ENCODE measurements at regions of chr12 and their contacts with region 1.

Region 1: GRCh38 chr12:26097046-26097878 is 27.6 kb downstream of the BHLHE41 start:
- DNase-seq: peak; percentile 82 to 87
- H3K4me3 ChIP-seq: no peak overlapping the region
- H3K4me3 Mint-ChIP-seq: no peak overlapping the region
- H3K27ac Mint-ChIP-seq: no peak overlapping the region
- H3K4me1 ChIP-seq: peaks cover 54% of the 10 kb centered on the region
- H3K4me1 Mint-ChIP-seq: peaks cover 41% of the 10 kb centered on the region
- H3K27me3 ChIP-seq: no peaks in the 10 kb centered on the region
- H3K27me3 Mint-ChIP-seq: no peaks in the 10 kb centered on the region
- CTCF ChIP-seq: peak; percentile 96 to 98

Region 2: DNA sequence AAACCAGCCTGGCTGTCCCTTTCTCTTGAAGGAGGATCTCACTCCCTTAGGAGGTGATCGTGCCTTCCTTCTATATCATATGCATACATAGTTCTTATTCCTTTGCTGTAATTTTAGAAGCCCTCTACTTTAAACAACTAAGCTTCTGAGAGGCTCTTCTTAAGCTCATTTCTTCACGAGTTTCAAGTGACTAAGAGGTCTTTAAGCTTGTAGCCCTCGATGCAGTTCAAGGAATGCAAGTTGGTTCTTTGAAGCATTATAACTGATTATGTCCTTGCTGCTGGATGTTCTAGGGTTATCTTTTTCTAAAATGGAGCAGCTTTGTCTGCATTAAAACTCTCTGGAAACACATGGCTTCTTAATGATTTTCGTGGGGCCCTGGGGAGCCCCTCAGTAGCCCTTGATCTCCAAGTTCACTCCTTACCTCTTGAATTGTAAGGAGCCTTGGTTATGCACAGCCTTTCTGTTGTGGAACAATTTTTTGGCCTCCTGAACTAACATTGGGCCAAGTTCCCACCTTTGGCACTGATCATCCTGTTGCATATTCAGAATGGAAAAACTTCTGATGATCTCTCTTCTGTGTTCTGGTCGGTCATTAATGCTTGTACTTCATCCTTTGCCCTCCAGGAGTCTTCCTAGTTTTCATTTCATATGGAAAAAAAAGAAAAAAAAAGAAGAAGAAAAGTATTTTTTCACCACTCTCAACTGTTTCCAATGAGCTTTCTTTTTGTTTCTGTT is 126.2 kb before region 1 on chr12:
- CTCF ChIA-PET with region 1: no interaction called
- POLR2A ChIA-PET with region 1: no interaction called
- intact Hi-C with region 1: no loop called
- DNase-seq: no peak
- H3K4me3 ChIP-seq: no peak overlapping the region
- H3K4me3 Mint-ChIP-seq: no peak overlapping the region
- H3K27ac Mint-ChIP-seq: no peak overlapping the region
- H3K4me1 ChIP-seq: no peaks in the 10 kb centered on the region
- H3K4me1 Mint-ChIP-seq: peaks cover 64% of the 10 kb centered on the region
- H3K27me3 ChIP-seq: no peaks in the 10 kb centered on the region
- H3K27me3 Mint-ChIP-seq: no peaks in the 10 kb centered on the region
- CTCF ChIP-seq: peak in 1 of 2 experiments; percentile 56

Region 3: DNA sequence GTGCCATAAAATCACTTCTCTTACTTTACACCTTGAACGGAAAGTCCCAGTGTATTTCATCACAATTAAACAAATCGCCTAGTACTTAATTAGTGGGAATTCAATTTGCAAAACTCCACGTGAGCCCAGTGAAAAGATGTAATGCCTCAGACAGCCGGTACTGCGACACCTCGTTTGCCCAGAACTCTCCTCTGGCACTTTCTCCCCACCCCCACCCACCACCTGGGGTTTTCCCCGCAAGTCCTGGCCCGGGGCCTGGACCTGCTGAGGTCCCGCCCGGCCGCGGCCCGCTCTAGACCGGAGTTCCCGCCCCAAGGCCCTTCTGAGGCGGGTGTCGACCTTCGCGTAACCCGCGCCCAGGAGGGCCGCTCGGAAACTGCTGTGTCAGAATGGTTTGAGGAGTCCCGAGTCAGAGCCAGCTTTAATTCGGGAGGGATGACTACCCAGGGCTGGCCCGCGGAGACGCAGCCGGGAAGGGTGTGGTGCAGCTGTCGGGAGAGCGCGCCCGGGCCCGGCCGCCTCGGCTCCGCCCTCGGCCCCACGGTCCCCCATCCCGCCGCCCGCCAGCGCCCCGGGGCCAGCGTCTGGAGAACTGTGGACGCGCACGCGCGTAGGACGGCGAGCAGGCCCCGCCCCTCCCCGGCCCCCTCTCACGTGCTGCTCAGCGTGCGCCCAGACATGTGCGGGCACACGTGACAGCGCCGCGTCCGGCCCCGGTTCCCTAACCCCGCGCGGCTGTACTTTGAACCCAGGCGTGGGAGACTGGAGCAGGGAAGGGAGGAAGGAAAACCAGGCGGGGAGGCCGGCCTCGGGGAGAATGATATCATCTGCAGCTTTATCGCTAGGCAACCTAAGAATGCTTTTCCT is 16.8 kb after region 1 on chr12:
- CTCF ChIA-PET with region 1: interaction called, 6 read pairs
- POLR2A ChIA-PET with region 1: interaction called, 8 read pairs
- intact Hi-C with region 1: loop called (anchors 1 kb)
- DNase-seq: peak; percentile 98
- H3K4me3 ChIP-seq: peak overlapping the region; percentile 77
- H3K4me3 Mint-ChIP-seq: peak overlapping the region; percentile 78
- H3K27ac Mint-ChIP-seq: peak overlapping the region; percentile 90
- H3K4me1 ChIP-seq: peaks cover 23% of the 10 kb centered on the region
- H3K4me1 Mint-ChIP-seq: peaks cover 18% of the 10 kb centered on the region
- H3K27me3 ChIP-seq: no peaks in the 10 kb centered on the region
- H3K27me3 Mint-ChIP-seq: peaks cover 2% of the 10 kb centered on the region
- CTCF ChIP-seq: peak; percentile 12 to 48

Region 4: GRCh38 chr12:26156201-26156871 is 59.1 kb after region 1 on chr12:
- CTCF ChIA-PET with region 1: no interaction called
- POLR2A ChIA-PET with region 1: no interaction called
- intact Hi-C with region 1: loop called (anchors 2 kb)
- DNase-seq: no peak
- H3K4me3 ChIP-seq: no peak overlapping the region
- H3K4me3 Mint-ChIP-seq: no peak overlapping the region
- H3K27ac Mint-ChIP-seq: no peak overlapping the region
- H3K4me1 ChIP-seq: peaks cover 22% of the 10 kb centered on the region
- H3K4me1 Mint-ChIP-seq: peaks cover 12% of the 10 kb centered on the region
- H3K27me3 ChIP-seq: no peaks in the 10 kb centered on the region
- H3K27me3 Mint-ChIP-seq: no peaks in the 10 kb centered on the region
- CTCF ChIP-seq: no peak

Region 5: DNA sequence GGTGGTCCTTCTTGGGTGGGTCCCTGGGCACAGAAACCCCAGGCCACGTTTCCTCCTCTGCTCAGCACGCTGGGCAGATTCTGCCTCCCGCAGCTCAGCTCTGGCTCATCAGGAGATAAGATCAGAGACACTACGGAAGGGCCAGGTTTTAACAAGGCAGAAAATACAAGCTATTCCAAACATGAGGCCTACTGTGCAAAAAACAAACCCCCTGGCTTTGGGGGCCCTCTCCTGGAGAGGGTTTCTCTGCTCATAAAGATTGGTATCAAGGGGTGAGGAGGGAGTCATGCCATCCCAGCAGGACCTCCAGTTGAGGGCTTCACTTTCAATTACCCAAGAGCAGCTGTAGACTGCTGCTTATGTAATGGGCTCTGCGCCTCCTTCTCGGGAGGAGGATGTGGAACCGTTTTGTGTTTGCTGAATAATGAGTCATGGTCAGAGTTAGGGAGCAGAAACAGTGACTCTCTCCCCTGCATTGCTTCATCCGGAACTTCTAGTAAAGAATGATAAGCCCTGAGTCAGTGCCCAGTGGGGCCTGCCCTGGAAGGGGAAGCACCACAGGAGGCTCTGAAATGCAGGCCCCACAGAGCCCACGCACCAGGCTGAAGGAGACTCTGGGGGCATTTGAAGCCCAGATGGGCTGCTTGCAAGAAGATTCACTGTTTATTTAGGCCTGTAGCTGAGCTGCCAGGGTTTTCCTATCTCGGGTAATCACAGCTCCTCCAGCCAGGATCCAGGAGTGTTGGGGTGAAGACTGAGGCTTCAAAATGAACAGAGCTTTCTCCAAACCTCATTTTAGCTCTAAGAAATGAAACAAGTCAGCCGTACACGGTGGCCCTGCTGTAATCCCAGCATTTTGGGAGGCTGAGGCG is 177.4 kb after region 1 on chr12:
- CTCF ChIA-PET with region 1: interaction called, 3 read pairs
- POLR2A ChIA-PET with region 1: no interaction called
- intact Hi-C with region 1: loop called (anchors 1 kb)
- DNase-seq: peak; percentile 84 to 88
- H3K4me3 ChIP-seq: no peak overlapping the region
- H3K4me3 Mint-ChIP-seq: peak overlapping the region; percentile 6
- H3K27ac Mint-ChIP-seq: peak overlapping the region; percentile 92
- H3K4me1 ChIP-seq: peaks cover 47% of the 10 kb centered on the region
- H3K4me1 Mint-ChIP-seq: peaks cover 30% of the 10 kb centered on the region
- H3K27me3 ChIP-seq: no peaks in the 10 kb centered on the region
- H3K27me3 Mint-ChIP-seq: no peaks in the 10 kb centered on the region
- CTCF ChIP-seq: no peak

Region 6: GRCh38 chr12:26402648-26403047 is 305.4 kb after region 1 on chr12:
- CTCF ChIA-PET with region 1: no interaction called
- POLR2A ChIA-PET with region 1: no interaction called
- intact Hi-C with region 1: loop called (anchors 1 kb)
- DNase-seq: peak; percentile 46 to 47
- H3K4me3 ChIP-seq: no peak overlapping the region
- H3K4me3 Mint-ChIP-seq: no peak overlapping the region
- H3K27ac Mint-ChIP-seq: no peak overlapping the region
- H3K4me1 ChIP-seq: no peaks in the 10 kb centered on the region
- H3K4me1 Mint-ChIP-seq: no peaks in the 10 kb centered on the region
- H3K27me3 ChIP-seq: no peaks in the 10 kb centered on the region
- H3K27me3 Mint-ChIP-seq: no peaks in the 10 kb centered on the region
- CTCF ChIP-seq: peak; percentile 38 to 43

Region 7: DNA sequence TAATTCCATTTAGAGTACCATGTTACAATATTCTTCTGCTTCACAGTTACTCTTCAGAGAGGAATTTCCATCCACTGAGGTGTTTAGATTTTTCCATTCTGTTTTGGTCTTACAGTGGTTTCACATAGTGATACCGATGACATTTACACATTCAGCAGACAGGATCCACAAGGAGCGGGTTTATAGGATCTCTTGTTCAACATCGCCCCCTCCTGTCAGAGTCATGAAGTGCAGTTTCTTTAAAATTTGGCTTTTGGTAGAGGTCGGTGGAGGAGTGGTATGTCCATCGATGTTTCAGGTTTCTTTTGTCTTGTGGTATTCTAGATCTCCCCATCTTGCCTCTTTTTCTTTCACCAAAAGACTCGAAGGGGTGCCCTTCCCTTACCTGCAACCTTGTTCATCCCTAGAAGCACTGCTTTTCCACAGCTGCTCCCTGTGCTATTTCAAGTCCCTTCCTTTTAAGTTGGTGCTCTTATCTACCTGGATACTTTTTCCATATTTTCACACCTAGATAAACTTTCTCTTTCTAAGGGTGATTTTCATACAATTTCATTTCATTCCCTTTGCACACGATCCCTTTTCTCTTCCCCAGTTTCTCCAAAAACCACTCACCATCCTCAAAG is 554.4 kb after region 1 on chr12:
- CTCF ChIA-PET with region 1: no interaction called
- POLR2A ChIA-PET with region 1: no interaction called
- intact Hi-C with region 1: loop called (anchors 1 kb)
- DNase-seq: peak; percentile 65 to 88
- H3K4me3 ChIP-seq: no peak overlapping the region
- H3K4me3 Mint-ChIP-seq: no peak overlapping the region
- H3K27ac Mint-ChIP-seq: no peak overlapping the region
- H3K4me1 ChIP-seq: peaks cover 23% of the 10 kb centered on the region
- H3K4me1 Mint-ChIP-seq: peaks cover 32% of the 10 kb centered on the region
- H3K27me3 ChIP-seq: no peaks in the 10 kb centered on the region
- H3K27me3 Mint-ChIP-seq: no peaks in the 10 kb centered on the region
- CTCF ChIP-seq: peak; percentile 88 to 99

Region 8: DNA sequence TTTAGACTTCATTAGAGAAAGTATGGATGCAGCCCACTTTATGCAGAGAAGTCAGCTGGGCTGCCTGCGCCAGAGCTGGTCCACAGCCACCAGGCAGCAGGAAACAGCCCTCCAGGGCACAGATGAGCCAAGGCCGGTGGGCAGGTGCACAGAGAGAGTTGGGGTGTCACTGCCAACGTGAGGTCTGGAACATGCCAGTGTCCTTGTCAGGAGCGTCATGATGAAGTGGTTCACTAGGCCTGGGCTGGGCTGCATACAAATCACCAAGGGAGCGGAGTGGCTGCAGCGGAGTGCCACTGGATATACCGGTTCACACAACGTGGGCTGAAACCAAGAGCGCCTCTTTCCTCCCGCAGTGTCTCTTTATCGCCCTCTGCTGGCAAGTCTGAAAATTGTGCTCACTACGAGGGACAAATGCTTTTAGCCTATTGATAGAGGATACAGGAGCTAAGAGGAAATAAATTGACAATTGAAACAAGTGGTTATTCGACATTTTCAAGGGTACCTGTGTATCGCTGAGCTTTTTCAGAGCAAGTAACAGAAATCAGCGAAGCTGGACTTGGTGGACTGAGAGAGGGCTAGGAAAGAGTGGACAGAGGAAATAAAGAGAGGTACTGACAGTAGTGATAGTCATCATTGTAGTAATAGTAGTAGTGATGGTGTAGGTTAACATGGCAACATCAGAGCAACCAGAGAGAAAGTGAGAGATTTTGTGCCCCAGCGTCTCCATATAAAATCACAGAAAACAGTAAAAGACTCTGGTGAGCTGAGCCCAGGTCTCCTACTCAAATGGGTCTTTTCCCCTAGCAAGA is 787.7 kb after region 1 on chr12:
- CTCF ChIA-PET with region 1: no interaction called
- POLR2A ChIA-PET with region 1: no interaction called
- intact Hi-C with region 1: loop called (anchors 10 kb)
- DNase-seq: peak; percentile 90 to 92
- H3K4me3 ChIP-seq: no peak overlapping the region
- H3K4me3 Mint-ChIP-seq: no peak overlapping the region
- H3K27ac Mint-ChIP-seq: no peak overlapping the region
- H3K4me1 ChIP-seq: no peaks in the 10 kb centered on the region
- H3K4me1 Mint-ChIP-seq: no peaks in the 10 kb centered on the region
- H3K27me3 ChIP-seq: no peaks in the 10 kb centered on the region
- H3K27me3 Mint-ChIP-seq: no peaks in the 10 kb centered on the region
- CTCF ChIP-seq: peak; percentile 98 to 99